OCI-LY7 (cell line): ENCODE measurements at regions of chr22 and their contacts with region 1.

Region 1: DNA sequence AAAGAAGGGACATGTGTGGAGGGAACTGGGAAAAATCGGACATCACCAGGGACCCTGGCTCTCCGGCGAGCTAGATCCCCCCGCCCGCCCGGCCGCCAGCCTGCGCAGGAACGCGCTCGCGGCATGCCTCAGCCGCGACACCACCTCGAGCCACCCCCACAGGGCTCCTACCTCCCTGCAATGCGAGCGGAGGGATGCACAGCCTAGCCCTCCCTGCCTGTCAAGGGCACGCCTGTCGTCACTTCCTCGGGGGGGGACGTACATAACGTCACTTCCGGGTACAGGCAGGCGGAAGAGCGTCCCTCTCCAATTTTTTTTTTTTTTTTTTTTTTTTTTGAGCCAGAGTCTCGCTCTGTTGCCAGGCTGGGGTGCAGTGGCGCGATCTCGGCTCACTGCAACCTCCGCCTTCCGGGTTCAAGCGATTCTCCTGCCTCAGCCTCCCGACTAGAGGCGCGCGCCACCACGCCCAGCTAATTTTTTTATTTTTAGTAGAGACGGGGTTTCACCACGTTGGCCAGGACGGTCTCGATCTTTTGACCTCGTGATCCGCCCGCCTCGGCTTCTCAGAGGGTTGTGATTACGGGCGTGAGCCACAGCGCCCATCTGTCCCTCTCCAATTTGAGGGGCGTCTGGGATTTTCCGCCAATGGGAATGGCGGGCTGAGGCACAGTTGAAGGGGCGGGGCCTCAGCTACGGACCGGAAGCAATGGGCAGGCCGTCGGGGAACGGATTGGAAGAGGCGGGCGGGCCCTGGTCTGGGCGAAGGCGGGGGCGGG is at the start of gene TXN2:
- DNase-seq: peak; percentile 97
- H3K4me3 ChIP-seq: peak within 1 kb of the TSS; percentile 79
- H3K27ac ChIP-seq: peak within 1 kb of the TSS; percentile 93
- H3K4me1 ChIP-seq: peaks cover 12% of the 10 kb centered on the region
- CTCF ChIP-seq: no peak
- total RNA-seq, gene TXN2: 32.0 and 33.4 TPM in 2 replicates

Region 2: GRCh38 chr22:36452250-36452977 is 29.2 kb before region 1 on chr22:
- CTCF ChIA-PET with region 1: no interaction called
- POLR2A ChIA-PET with region 1: no interaction called
- intact Hi-C with region 1: no loop called
- DNase-seq: peak; percentile 19
- H3K4me3 ChIP-seq: peak overlapping the region; percentile 35
- H3K27ac ChIP-seq: peak overlapping the region; percentile 80
- H3K4me1 ChIP-seq: peaks cover 46% of the 10 kb centered on the region
- CTCF ChIP-seq: 0 out of 2 replicates have a peak, but pooled peaks have one; percentile 21

Region 3: DNA sequence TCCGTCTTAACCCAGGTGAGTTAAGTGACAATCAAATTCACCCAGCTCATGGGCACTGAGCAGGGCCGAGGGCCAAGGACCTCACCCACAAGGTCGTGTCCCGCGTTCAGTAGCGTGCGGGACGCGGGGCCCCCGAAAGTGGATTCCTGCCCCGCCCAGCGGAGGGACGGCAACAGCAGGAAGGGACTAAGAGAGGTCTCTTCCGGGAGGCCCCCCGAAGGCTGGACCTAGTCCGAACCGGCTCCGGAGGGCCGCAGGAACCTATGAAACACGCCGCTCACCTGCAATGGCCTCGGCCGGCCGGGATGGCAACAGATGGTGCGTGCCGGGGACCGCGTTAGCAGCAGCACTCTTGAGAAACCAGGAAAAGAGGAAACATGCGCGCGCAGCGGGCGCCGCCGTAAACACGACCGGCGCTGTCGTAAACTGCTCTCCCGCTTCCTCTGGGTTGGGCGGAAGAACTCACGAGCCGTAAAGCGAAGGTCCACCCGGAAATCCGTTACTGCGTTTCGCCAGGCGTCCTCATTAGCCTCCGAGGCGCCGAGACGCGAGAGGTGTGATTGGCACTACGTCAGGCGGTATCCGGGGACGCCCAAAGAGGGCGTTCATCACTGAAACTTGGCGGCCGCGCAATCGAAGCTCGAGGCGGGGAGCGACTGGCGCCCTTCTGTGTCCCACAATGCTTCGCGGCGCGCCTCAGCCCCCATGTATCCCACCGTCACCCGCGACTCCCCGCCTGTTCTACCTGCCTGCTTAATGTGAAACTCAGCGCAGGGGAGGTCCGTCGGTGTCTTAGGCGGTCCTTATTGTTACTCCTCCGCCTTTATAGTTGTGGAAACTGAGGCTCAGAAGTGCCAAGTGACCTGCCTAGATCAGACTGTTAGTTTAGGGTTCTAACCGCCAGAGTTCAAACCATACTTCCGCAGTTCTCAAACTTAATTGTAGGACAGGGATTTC is 47.5 kb after region 1 on chr22 and contains the start of gene EIF3D:
- CTCF ChIA-PET with region 1: no interaction called
- POLR2A ChIA-PET with region 1: no interaction called
- intact Hi-C with region 1: loop called (anchors 1 kb)
- DNase-seq: peak; percentile 100
- H3K4me3 ChIP-seq: peak within 1 kb of the TSS; percentile 89
- H3K27ac ChIP-seq: peak within 1 kb of the TSS; percentile 87
- H3K4me1 ChIP-seq: peaks cover 26% of the 10 kb centered on the region
- CTCF ChIP-seq: no peak
- total RNA-seq, gene EIF3D: 270 and 307 TPM in 2 replicates